ENCODE measurements at regions of chr2 and their contacts with region 1.

Region 1: GRCh38 chr2:60998628-60999545 is 18.6 kb upstream of the PEX13 start:
- DNase-seq: peak in 2 of 5 donors; percentile 55 to 75
- H3K4me3 ChIP-seq: no peak overlapping the region
- H3K27ac ChIP-seq: no peak overlapping the region
- H3K4me1 ChIP-seq: no peaks in the 10 kb centered on the region
- H3K27me3 ChIP-seq: no peaks in the 10 kb centered on the region
- CTCF ChIP-seq: peak; percentile 45

Region 2: GRCh38 chr2:60707750-60708371 is 291.0 kb before region 1 on chr2:
- intact Hi-C with region 1: loop called (anchors 10 kb)
- DNase-seq: peak in 2 of 5 donors; percentile 48 to 71
- H3K4me3 ChIP-seq: no peak overlapping the region
- H3K27ac ChIP-seq: no peak overlapping the region
- H3K4me1 ChIP-seq: no peaks in the 10 kb centered on the region
- H3K27me3 ChIP-seq: no peaks in the 10 kb centered on the region
- CTCF ChIP-seq: peak; percentile 43

Region 3: GRCh38 chr2:60840880-60841279 is 158.0 kb before region 1 on chr2:
- intact Hi-C with region 1: no loop called
- DNase-seq: no peak
- H3K4me3 ChIP-seq: no peak overlapping the region
- H3K27ac ChIP-seq: no peak overlapping the region
- H3K4me1 ChIP-seq: no peaks in the 10 kb centered on the region
- H3K27me3 ChIP-seq: no peaks in the 10 kb centered on the region
- CTCF ChIP-seq: no peak

Measured in kidney (tissue), 22 donors.